Vagina (tissue), 2 donors: ENCODE measurements at regions of chr12 and their contacts with region 1.

Region 1: DNA sequence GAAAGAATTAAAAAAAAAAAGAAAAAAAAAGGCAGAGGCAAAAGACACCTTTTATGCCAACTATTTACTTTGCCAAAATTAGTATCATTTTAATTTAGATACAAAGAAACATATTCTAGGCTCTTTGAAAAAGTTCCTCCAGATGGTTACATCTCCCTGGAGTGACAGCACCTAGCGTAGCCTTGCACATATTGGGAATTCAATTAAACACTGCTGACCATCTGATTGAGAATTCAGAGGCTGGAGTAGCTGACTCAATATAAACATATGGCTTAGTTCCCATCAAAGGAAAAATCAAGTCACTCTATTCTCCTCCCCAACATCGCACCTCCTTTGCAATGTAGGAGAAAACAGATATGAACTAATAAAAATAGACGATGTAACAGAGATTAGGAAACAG is 36.4 kb downstream of the ANKS1B start:
- DNase-seq: no peak
- H3K4me3 ChIP-seq: no peak overlapping the region
- H3K27ac ChIP-seq: no peak overlapping the region
- H3K4me1 ChIP-seq: no peaks in the 10 kb centered on the region
- H3K27me3 ChIP-seq: no peaks in the 10 kb centered on the region
- CTCF ChIP-seq: no peak
- POLR2A ChIP-seq: no peak

Region 2: GRCh38 chr12:100020370-100020769 is 72.0 kb after region 1 on chr12:
- intact Hi-C with region 1: loop called (anchors 2 kb)
- DNase-seq: no peak
- H3K4me3 ChIP-seq: no peak overlapping the region
- H3K27ac ChIP-seq: no peak overlapping the region
- H3K4me1 ChIP-seq: no peaks in the 10 kb centered on the region
- H3K27me3 ChIP-seq: no peaks in the 10 kb centered on the region
- CTCF ChIP-seq: no peak
- POLR2A ChIP-seq: no peak